Motor neuron (in vitro differentiated cells): ENCODE measurements at regions of chr21 and their contacts with region 1.

Region 1: GRCh38 chr21:14877570-14878228 is 187.1 kb downstream of the NRIP1 start:
- ATAC-seq: peak in 2 of 8 experiments; percentile 4 to 18
- H3K4me3 ChIP-seq: no peak overlapping the region
- H3K27ac ChIP-seq: no peak overlapping the region
- H3K4me1 ChIP-seq: peaks cover 13 to 16% of the 10 kb centered on the region in 2 donors

Region 2: DNA sequence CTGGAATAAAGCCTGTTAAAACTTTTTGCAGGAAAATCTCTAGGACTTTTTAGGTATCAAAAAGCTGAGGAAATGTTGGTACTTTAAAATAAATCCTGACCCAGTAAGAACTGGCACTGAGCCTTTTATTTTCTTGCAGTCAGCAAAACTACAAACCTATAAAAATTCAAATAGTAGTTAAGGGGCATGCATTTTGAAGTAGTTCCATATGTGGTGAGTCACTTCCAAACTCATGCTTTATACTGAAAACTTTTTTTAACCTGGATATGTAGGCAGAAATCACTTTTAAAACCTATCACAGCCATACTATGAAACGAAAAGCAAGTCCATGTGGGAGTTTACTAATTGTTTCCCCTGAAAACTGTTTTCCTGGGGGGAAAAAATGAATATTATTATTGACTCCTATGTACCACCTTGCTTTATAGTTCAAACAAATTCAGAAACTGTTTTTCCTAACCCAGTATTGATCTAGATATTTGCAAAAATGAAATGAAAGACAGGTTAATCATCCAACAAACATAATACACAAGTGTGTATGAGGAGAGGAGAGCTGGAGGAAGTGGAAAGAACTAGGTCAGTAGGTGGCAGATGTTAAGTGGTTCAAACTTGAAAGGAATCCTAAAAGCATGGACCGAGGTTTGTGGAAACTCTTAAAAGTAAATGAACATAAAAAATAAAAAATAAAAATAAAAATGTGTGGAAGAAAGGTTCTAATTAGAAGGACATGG is 156.6 kb after region 1 on chr21:
- in situ Hi-C with region 1: loop called in 1 of 9 experiments (anchors 25 kb)
- ATAC-seq: peak in 3 of 8 experiments; percentile 77 to 81 (median 80)
- H3K4me3 ChIP-seq: no peak overlapping the region
- H3K27ac ChIP-seq: no peak overlapping the region
- H3K4me1 ChIP-seq: no peaks in the 10 kb centered on the region